CD4-positive, alpha-beta T cell (primary cell): ENCODE measurements at regions of chr12 and their contacts with region 1.

Region 1: GRCh38 chr12:108514973-108515814 is at the start of gene FICD:
- DNase-seq: peak; percentile 96 to 100 (median 99)
- ATAC-seq: peak; percentile 93
- H3K4me3 ChIP-seq: peak within 1 kb of the TSS; percentile 99
- H3K4me3 Mint-ChIP-seq: peak within 1 kb of the TSS; percentile 96
- H3K27ac ChIP-seq: peak within 1 kb of the TSS; percentile 70 to 71
- H3K27ac Mint-ChIP-seq: peak within 1 kb of the TSS; percentile 87
- H3K4me1 ChIP-seq: peaks cover 34% of the 10 kb centered on the region
- H3K4me1 Mint-ChIP-seq: peaks cover 29% of the 10 kb centered on the region
- H3K27me3 ChIP-seq: no peaks in the 10 kb centered on the region
- H3K27me3 Mint-ChIP-seq: no peaks in the 10 kb centered on the region
- CTCF ChIP-seq: no peak
- total RNA-seq, gene FICD: 2.7 to 3.2 TPM

Region 2: DNA sequence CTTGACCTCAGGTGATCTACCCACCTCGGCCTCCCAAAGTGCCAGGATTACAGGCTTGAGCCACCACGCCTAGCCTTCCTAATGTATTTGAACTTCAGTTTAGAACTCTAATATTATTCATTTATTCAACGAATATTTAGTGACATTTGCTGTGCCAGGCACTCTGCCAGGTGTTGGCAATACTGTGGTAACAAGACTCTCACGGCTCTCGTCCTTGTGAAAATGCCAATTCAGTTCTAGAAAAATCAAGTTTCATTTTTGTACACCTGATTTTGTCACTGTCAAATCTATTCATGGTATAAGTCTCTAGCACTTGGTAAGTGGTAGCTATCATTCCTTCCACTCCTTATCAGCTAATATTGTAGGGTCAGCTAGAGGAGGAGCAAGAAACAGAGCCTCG is 835.9 kb before region 1 on chr12:
- CTCF ChIA-PET with region 1: no interaction called
- POLR2A ChIA-PET with region 1: interaction called, 3 read pairs
- intact Hi-C with region 1: loop called (anchors 1 to 2 kb)
- DNase-seq: no peak
- ATAC-seq: no peak
- H3K4me3 ChIP-seq: no peak overlapping the region
- H3K4me3 Mint-ChIP-seq: no peak overlapping the region
- H3K27ac ChIP-seq: no peak overlapping the region
- H3K27ac Mint-ChIP-seq: no peak overlapping the region
- H3K4me1 ChIP-seq: peaks cover under 1% of the 10 kb centered on the region
- H3K4me1 Mint-ChIP-seq: no peaks in the 10 kb centered on the region
- H3K27me3 ChIP-seq: peaks cover 0 to 3% of the 10 kb centered on the region in 2 experiments
- H3K27me3 Mint-ChIP-seq: peaks cover 17% of the 10 kb centered on the region
- CTCF ChIP-seq: no peak

Region 3: GRCh38 chr12:107718606-107719005 is 796.6 kb before region 1 on chr12:
- CTCF ChIA-PET with region 1: no interaction called
- POLR2A ChIA-PET with region 1: no interaction called
- intact Hi-C with region 1: no loop called
- DNase-seq: no peak
- ATAC-seq: no peak
- H3K4me3 ChIP-seq: no peak overlapping the region
- H3K4me3 Mint-ChIP-seq: no peak overlapping the region
- H3K27ac ChIP-seq: no peak overlapping the region
- H3K27ac Mint-ChIP-seq: no peak overlapping the region
- H3K4me1 ChIP-seq: no peaks in the 10 kb centered on the region
- H3K4me1 Mint-ChIP-seq: no peaks in the 10 kb centered on the region
- H3K27me3 ChIP-seq: no peaks in the 10 kb centered on the region
- H3K27me3 Mint-ChIP-seq: no peaks in the 10 kb centered on the region
- CTCF ChIP-seq: no peak

Region 4: GRCh38 chr12:107992870-107993451 is 522.2 kb before region 1 on chr12:
- CTCF ChIA-PET with region 1: no interaction called
- POLR2A ChIA-PET with region 1: no interaction called
- intact Hi-C with region 1: loop called (anchors 1 to 2 kb)
- DNase-seq: peak in 3 of 14 experiments; percentile 13 to 21 (median 13)
- ATAC-seq: no peak
- H3K4me3 ChIP-seq: no peak overlapping the region
- H3K4me3 Mint-ChIP-seq: no peak overlapping the region
- H3K27ac ChIP-seq: no peak overlapping the region
- H3K27ac Mint-ChIP-seq: no peak overlapping the region
- H3K4me1 ChIP-seq: no peaks in the 10 kb centered on the region
- H3K4me1 Mint-ChIP-seq: no peaks in the 10 kb centered on the region
- H3K27me3 ChIP-seq: no peaks in the 10 kb centered on the region
- H3K27me3 Mint-ChIP-seq: peaks cover 48% of the 10 kb centered on the region
- CTCF ChIP-seq: no peak

Region 5: DNA sequence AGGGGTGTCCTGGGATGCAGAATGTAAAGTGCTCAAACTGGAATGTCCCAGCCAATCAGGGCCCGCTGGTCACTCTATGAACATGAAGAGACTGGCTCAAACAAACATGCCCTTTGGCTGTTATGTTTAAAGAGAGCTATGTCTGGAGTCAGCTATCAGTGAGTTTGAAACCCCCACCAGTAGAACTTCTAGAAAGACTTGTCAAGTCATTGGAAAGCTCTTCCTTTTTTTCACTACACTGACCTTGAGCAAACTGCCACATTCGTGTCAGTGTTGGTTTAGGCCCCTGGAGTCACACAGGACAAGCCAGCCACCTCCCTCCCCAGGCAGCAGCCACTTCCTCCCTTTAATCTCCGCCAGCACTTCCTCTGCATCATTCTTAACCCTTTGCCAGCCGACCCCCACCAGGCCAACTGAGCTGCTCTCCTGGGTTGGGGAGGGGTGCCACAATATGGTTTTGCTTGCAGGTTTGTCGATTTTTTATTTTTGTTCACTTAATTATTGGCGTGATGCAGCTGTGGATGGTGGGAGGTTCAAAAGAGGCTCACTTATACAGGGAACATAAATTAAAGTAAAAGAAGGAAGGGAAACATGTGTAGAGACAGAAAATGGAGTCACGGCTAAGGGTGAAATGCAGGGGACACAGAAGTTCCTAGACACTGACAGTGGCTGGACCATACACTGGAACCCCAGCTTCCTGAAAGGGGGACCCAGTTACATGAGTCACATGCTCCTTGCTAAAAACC is 201.4 kb before region 1 on chr12:
- CTCF ChIA-PET with region 1: no interaction called
- POLR2A ChIA-PET with region 1: no interaction called
- intact Hi-C with region 1: no loop called
- DNase-seq: peak in 4 of 14 experiments; percentile 17 to 83 (median 57)
- ATAC-seq: peak; percentile 57
- H3K4me3 ChIP-seq: no peak overlapping the region
- H3K4me3 Mint-ChIP-seq: peak overlapping the region; percentile 63
- H3K27ac ChIP-seq: no peak overlapping the region
- H3K27ac Mint-ChIP-seq: peak overlapping the region; percentile 77
- H3K4me1 ChIP-seq: peaks cover 25% of the 10 kb centered on the region
- H3K4me1 Mint-ChIP-seq: peaks cover 50% of the 10 kb centered on the region
- H3K27me3 ChIP-seq: no peaks in the 10 kb centered on the region
- H3K27me3 Mint-ChIP-seq: no peaks in the 10 kb centered on the region
- CTCF ChIP-seq: no peak

Region 6: DNA sequence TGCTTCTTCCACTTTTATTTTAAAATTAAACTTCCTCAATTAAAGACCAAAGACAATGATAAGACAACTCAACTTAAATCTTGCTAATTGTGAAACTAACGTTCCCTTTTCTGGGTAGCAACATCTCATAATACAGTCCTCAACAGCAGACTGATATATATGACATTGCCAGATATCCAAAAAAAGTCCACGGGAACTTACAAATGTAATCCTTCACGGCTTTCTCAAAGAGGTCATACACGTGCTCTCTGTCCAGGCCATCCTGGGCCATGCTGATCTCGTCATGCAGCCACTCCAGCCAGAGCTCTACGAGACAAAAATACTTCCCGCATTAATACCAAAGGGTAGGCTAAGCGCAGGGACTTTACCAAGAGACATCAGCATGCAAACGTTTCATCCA is 32.5 kb after region 1 on chr12:
- CTCF ChIA-PET with region 1: no interaction called
- POLR2A ChIA-PET with region 1: no interaction called
- intact Hi-C with region 1: no loop called
- DNase-seq: no peak
- ATAC-seq: no peak
- H3K4me3 ChIP-seq: no peak overlapping the region
- H3K4me3 Mint-ChIP-seq: no peak overlapping the region
- H3K27ac ChIP-seq: no peak overlapping the region
- H3K27ac Mint-ChIP-seq: peak overlapping the region; percentile 25
- H3K4me1 ChIP-seq: peaks cover 6% of the 10 kb centered on the region
- H3K4me1 Mint-ChIP-seq: peaks cover 54% of the 10 kb centered on the region
- H3K27me3 ChIP-seq: no peaks in the 10 kb centered on the region
- H3K27me3 Mint-ChIP-seq: no peaks in the 10 kb centered on the region
- CTCF ChIP-seq: no peak

Region 7: GRCh38 chr12:108731105-108731865 is 216.1 kb after region 1 on chr12 and contains the start of gene CORO1C:
- CTCF ChIA-PET with region 1: no interaction called
- POLR2A ChIA-PET with region 1: no interaction called
- intact Hi-C with region 1: loop called in 1 of 2 experiments (anchors 5 kb)
- DNase-seq: peak; percentile 88 to 99 (median 92)
- ATAC-seq: peak; percentile 73
- H3K4me3 ChIP-seq: peak within 1 kb of the TSS; percentile 93
- H3K4me3 Mint-ChIP-seq: peak within 1 kb of the TSS; percentile 97
- H3K27ac ChIP-seq: peak within 1 kb of the TSS; percentile 75 to 90
- H3K27ac Mint-ChIP-seq: peak within 1 kb of the TSS; percentile 88
- H3K4me1 ChIP-seq: peaks cover 26% of the 10 kb centered on the region
- H3K4me1 Mint-ChIP-seq: peaks cover 26% of the 10 kb centered on the region
- H3K27me3 ChIP-seq: no peaks in the 10 kb centered on the region
- H3K27me3 Mint-ChIP-seq: no peaks in the 10 kb centered on the region
- CTCF ChIP-seq: peak; percentile 75
- total RNA-seq, gene CORO1C: 6.7 to 7.4 TPM

Region 8: GRCh38 chr12:109093022-109093918 is 578.1 kb after region 1 on chr12 and contains the start of gene ALKBH2:
- CTCF ChIA-PET with region 1: no interaction called
- POLR2A ChIA-PET with region 1: no interaction called
- intact Hi-C with region 1: loop called in 1 of 2 experiments (anchors 2 kb)
- DNase-seq: peak; percentile 91 to 98 (median 94)
- ATAC-seq: peak; percentile 83
- H3K4me3 ChIP-seq: peak within 1 kb of the TSS; percentile 84
- H3K4me3 Mint-ChIP-seq: peak within 1 kb of the TSS; percentile 91
- H3K27ac ChIP-seq: peak within 1 kb of the TSS; percentile 64 to 66
- H3K27ac Mint-ChIP-seq: peak within 1 kb of the TSS; percentile 87
- H3K4me1 ChIP-seq: peaks cover 41% of the 10 kb centered on the region
- H3K4me1 Mint-ChIP-seq: peaks cover 43% of the 10 kb centered on the region
- H3K27me3 ChIP-seq: no peaks in the 10 kb centered on the region
- H3K27me3 Mint-ChIP-seq: no peaks in the 10 kb centered on the region
- CTCF ChIP-seq: peak; percentile 96
- total RNA-seq, gene ALKBH2: 12.8 to 14.0 TPM

Region 9: GRCh38 chr12:110124184-110124995 is 1609.2 kb after region 1 on chr12 and contains the start of gene IFT81:
- CTCF ChIA-PET with region 1: no interaction called
- POLR2A ChIA-PET with region 1: no interaction called
- intact Hi-C with region 1: loop called in 1 of 2 experiments (anchors 10 kb)
- DNase-seq: peak; percentile 94 to 99 (median 96)
- ATAC-seq: peak; percentile 89
- H3K4me3 ChIP-seq: peak within 1 kb of the TSS; percentile 98
- H3K4me3 Mint-ChIP-seq: peak within 1 kb of the TSS; percentile 92
- H3K27ac ChIP-seq: peak within 1 kb of the TSS; percentile 13 to 78
- H3K27ac Mint-ChIP-seq: peak within 1 kb of the TSS; percentile 63
- H3K4me1 ChIP-seq: peaks cover 12% of the 10 kb centered on the region
- H3K4me1 Mint-ChIP-seq: peaks cover 14% of the 10 kb centered on the region
- H3K27me3 ChIP-seq: no peaks in the 10 kb centered on the region
- H3K27me3 Mint-ChIP-seq: peaks cover 5% of the 10 kb centered on the region
- CTCF ChIP-seq: no peak
- total RNA-seq, gene IFT81: 0.41 to 1.1 TPM